ENCODE measurements at regions of chr3 and their contacts with region 1.

Region 1: DNA sequence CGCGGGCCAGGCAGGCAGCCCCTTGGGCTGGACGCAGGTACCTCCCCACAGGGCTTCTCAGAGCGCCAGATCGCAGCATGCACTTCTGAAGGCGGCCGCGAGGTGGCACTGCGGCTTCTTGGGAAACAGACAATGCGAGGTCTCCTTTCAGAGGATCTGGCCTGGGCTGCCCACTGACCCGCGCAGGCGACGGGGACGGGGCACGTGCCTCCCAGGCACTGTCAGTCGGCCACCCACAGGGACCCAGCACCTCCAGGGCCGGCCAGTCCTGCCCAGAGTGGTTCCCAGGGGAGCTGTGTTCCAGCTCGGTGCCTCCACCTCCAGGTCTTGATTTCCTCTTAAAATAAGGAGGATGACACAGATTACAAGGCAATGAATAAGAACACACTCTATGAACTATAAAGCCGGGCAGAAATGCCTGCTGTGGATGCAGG is 24.4 kb upstream of the TXNRD3 start:
- DNase-seq: peak; percentile 53 to 72
- ATAC-seq: peak; percentile 76 to 92
- H3K4me3 ChIP-seq: no peak overlapping the region
- H3K27ac ChIP-seq: no peak overlapping the region
- H3K4me1 ChIP-seq: no peaks in the 10 kb centered on the region
- H3K27me3 ChIP-seq: no peaks in the 10 kb centered on the region
- CTCF ChIP-seq: peak; percentile 88 to 98 (median 92)
- POLR2A ChIP-seq: no peak

Region 2: DNA sequence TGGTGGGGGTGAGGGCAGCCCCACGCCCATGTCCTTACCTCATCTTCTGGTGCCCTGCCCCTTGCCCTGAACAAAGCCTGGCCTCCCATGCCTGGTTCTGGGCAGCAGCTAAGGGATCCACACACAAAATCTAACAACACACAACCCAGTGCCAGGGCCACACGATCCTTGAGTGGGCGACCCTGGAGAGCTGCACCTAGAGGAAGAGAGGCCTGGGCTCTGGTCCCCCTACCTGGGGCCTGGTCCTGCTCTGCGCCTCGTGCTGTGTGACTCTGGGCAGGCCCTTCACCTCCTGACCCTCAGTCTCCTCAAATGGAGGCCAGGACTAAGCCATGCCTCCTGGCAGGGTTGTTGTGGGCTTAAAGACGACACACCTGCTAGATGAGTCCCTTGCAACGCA is 100.6 kb before region 1 on chr3:
- in situ Hi-C with region 1: no loop called
- intact Hi-C with region 1: no loop called
- DNase-seq: no peak
- ATAC-seq: no peak
- H3K4me3 ChIP-seq: no peak overlapping the region
- H3K27ac ChIP-seq: no peak overlapping the region
- H3K4me1 ChIP-seq: peaks cover 0 to 5% of the 10 kb centered on the region in 2 donors
- H3K27me3 ChIP-seq: no peaks in the 10 kb centered on the region
- CTCF ChIP-seq: no peak
- POLR2A ChIP-seq: no peak

Region 3: GRCh38 chr3:126746395-126747177 is 67.3 kb after region 1 on chr3:
- in situ Hi-C with region 1: no loop called
- intact Hi-C with region 1: loop called (anchors 1 kb)
- DNase-seq: peak; percentile 18 to 44
- ATAC-seq: peak; percentile 69 to 85
- H3K4me3 ChIP-seq: peak overlapping the region in 1 of 4 donors; percentile 14
- H3K27ac ChIP-seq: peak overlapping the region; percentile 55 to 76 (median 60)
- H3K4me1 ChIP-seq: peaks cover 18% of the 10 kb centered on the region in 2 donors
- H3K27me3 ChIP-seq: no peaks in the 10 kb centered on the region
- CTCF ChIP-seq: peak in 1 of 5 experiments; percentile 18
- POLR2A ChIP-seq: no peak

Region 4: GRCh38 chr3:127455541-127456450 is 776.5 kb after region 1 on chr3:
- in situ Hi-C with region 1: loop called in 1 of 4 experiments (anchors 10 kb)
- intact Hi-C with region 1: loop called (anchors 1 kb)
- DNase-seq: peak in 1 of 2 donors; percentile 30
- ATAC-seq: peak; percentile 72 to 77
- H3K4me3 ChIP-seq: peak overlapping the region in 2 of 4 donors; percentile 28 to 36
- H3K27ac ChIP-seq: no peak overlapping the region
- H3K4me1 ChIP-seq: peaks cover 4 to 6% of the 10 kb centered on the region in 2 donors
- H3K27me3 ChIP-seq: peaks cover 32 to 44% (median 42%) of the 10 kb centered on the region in 3 donors
- CTCF ChIP-seq: peak; percentile 57 to 83 (median 73)
- POLR2A ChIP-seq: no peak

Region 5: GRCh38 chr3:127544192-127544802 is 865.0 kb after region 1 on chr3:
- in situ Hi-C with region 1: loop called in 2 of 4 experiments (anchors 10 kb)
- intact Hi-C with region 1: loop called (anchors 2 kb)
- DNase-seq: peak; percentile 29 to 60
- ATAC-seq: peak; percentile 45 to 55
- H3K4me3 ChIP-seq: no peak overlapping the region
- H3K27ac ChIP-seq: no peak overlapping the region
- H3K4me1 ChIP-seq: peaks cover 7 to 9% of the 10 kb centered on the region in 2 donors
- H3K27me3 ChIP-seq: no peaks in the 10 kb centered on the region
- CTCF ChIP-seq: peak in 4 of 5 experiments; percentile 62 to 80 (median 74)
- POLR2A ChIP-seq: no peak

Measured in gastrocnemius medialis (tissue), 4 donors.